CD8-positive, alpha-beta T cell (primary cell): ENCODE measurements at regions of chr12 and their contacts with region 1.

Region 1: DNA sequence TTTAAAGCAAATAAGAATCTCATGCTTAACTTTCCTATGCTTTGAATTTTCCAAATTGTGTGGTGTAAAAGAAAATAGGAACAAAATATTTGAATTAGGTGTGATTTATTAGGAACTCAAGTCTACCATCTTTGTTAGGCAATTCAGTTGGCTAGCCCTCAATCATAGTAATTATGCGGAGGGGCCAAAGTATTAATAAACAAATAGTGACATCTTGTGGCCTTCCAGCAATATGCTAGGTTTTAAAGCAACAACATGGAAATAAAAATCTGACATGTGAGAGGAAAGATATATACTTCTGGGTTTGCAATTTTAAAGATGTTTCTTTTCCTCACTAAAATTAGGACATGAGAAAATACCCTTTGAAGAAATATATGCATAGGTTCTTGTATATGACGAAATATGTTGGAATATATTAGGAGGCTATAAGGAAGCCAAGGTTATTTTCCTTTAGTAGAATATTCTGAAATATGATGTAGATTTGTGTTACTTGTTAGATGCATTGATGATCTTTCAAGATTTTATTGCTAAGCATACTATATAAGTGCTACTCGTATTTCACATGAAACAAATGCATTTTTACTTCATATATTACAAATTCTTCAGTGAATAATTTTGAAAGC is 200.4 kb downstream of the PTPRO start:
- DNase-seq: peak in 2 of 9 experiments; percentile 19 to 24
- ATAC-seq: no peak
- H3K4me3 ChIP-seq: no peak overlapping the region
- H3K4me3 Mint-ChIP-seq: no peak overlapping the region
- H3K27ac ChIP-seq: no peak overlapping the region
- H3K27ac Mint-ChIP-seq: no peak overlapping the region
- H3K4me1 ChIP-seq: no peaks in the 10 kb centered on the region
- H3K4me1 Mint-ChIP-seq: peaks cover 2% of the 10 kb centered on the region
- H3K27me3 ChIP-seq: no peaks in the 10 kb centered on the region
- H3K27me3 Mint-ChIP-seq: peaks cover 30% of the 10 kb centered on the region
- CTCF ChIP-seq: no peak

Region 2: GRCh38 chr12:15268927-15269552 is 253.6 kb before region 1 on chr12:
- CTCF ChIA-PET with region 1: no interaction called
- POLR2A ChIA-PET with region 1: no interaction called
- intact Hi-C with region 1: loop called in 1 of 2 experiments (anchors 5 kb)
- DNase-seq: peak in 5 of 9 experiments; percentile 18 to 71 (median 27)
- ATAC-seq: peak; percentile 72
- H3K4me3 ChIP-seq: no peak overlapping the region
- H3K4me3 Mint-ChIP-seq: no peak overlapping the region
- H3K27ac ChIP-seq: no peak overlapping the region
- H3K27ac Mint-ChIP-seq: no peak overlapping the region
- H3K4me1 ChIP-seq: no peaks in the 10 kb centered on the region
- H3K4me1 Mint-ChIP-seq: no peaks in the 10 kb centered on the region
- H3K27me3 ChIP-seq: no peaks in the 10 kb centered on the region
- H3K27me3 Mint-ChIP-seq: peaks cover 5% of the 10 kb centered on the region
- CTCF ChIP-seq: peak; percentile 89

Region 3: GRCh38 chr12:15428632-15429031 is 94.0 kb before region 1 on chr12:
- CTCF ChIA-PET with region 1: no interaction called
- POLR2A ChIA-PET with region 1: no interaction called
- intact Hi-C with region 1: no loop called
- DNase-seq: no peak
- ATAC-seq: no peak
- H3K4me3 ChIP-seq: no peak overlapping the region
- H3K4me3 Mint-ChIP-seq: no peak overlapping the region
- H3K27ac ChIP-seq: no peak overlapping the region
- H3K27ac Mint-ChIP-seq: no peak overlapping the region
- H3K4me1 ChIP-seq: no peaks in the 10 kb centered on the region
- H3K4me1 Mint-ChIP-seq: no peaks in the 10 kb centered on the region
- H3K27me3 ChIP-seq: no peaks in the 10 kb centered on the region
- H3K27me3 Mint-ChIP-seq: peaks cover 10% of the 10 kb centered on the region
- CTCF ChIP-seq: no peak

Region 4: GRCh38 chr12:15488481-15488880 is 34.2 kb before region 1 on chr12:
- CTCF ChIA-PET with region 1: no interaction called
- POLR2A ChIA-PET with region 1: no interaction called
- intact Hi-C with region 1: no loop called
- DNase-seq: no peak
- ATAC-seq: no peak
- H3K4me3 ChIP-seq: no peak overlapping the region
- H3K4me3 Mint-ChIP-seq: no peak overlapping the region
- H3K27ac ChIP-seq: no peak overlapping the region
- H3K27ac Mint-ChIP-seq: no peak overlapping the region
- H3K4me1 ChIP-seq: no peaks in the 10 kb centered on the region
- H3K4me1 Mint-ChIP-seq: no peaks in the 10 kb centered on the region
- H3K27me3 ChIP-seq: peaks cover 0 to 4% of the 10 kb centered on the region in 2 experiments
- H3K27me3 Mint-ChIP-seq: peaks cover 14% of the 10 kb centered on the region
- CTCF ChIP-seq: no peak

Region 5: GRCh38 chr12:15899282-15899870 is 376.7 kb after region 1 on chr12:
- CTCF ChIA-PET with region 1: no interaction called
- POLR2A ChIA-PET with region 1: no interaction called
- intact Hi-C with region 1: no loop called
- DNase-seq: peak in 2 of 9 experiments; percentile 46 to 62
- ATAC-seq: peak; percentile 44
- H3K4me3 ChIP-seq: no peak overlapping the region
- H3K4me3 Mint-ChIP-seq: no peak overlapping the region
- H3K27ac ChIP-seq: no peak overlapping the region
- H3K27ac Mint-ChIP-seq: peak overlapping the region; percentile 74
- H3K4me1 ChIP-seq: no peaks in the 10 kb centered on the region
- H3K4me1 Mint-ChIP-seq: peaks cover 6% of the 10 kb centered on the region
- H3K27me3 ChIP-seq: no peaks in the 10 kb centered on the region
- H3K27me3 Mint-ChIP-seq: no peaks in the 10 kb centered on the region
- CTCF ChIP-seq: peak; percentile 94

Region 6: DNA sequence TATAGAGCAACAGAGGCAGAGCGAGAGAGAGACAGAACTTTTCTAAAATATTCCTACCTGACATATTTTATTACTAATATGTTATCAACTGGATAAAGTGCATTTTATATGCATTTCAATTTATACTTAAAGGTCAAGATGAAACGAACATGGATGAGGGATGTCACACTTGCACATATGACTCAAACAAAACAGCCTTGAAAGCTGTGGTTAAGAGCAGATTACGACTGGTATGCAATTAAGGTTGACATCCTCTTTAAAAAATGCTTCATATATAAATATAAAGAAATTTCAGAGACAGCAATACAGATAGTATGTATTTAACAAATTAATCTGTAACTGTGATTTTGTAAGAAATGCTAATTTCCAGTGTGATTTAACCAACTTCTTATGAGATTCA is 1030.8 kb after region 1 on chr12:
- CTCF ChIA-PET with region 1: no interaction called
- POLR2A ChIA-PET with region 1: no interaction called
- intact Hi-C with region 1: no loop called
- DNase-seq: no peak
- ATAC-seq: no peak
- H3K4me3 ChIP-seq: no peak overlapping the region
- H3K4me3 Mint-ChIP-seq: no peak overlapping the region
- H3K27ac ChIP-seq: no peak overlapping the region
- H3K27ac Mint-ChIP-seq: no peak overlapping the region
- H3K4me1 ChIP-seq: no peaks in the 10 kb centered on the region
- H3K4me1 Mint-ChIP-seq: no peaks in the 10 kb centered on the region
- H3K27me3 ChIP-seq: no peaks in the 10 kb centered on the region
- H3K27me3 Mint-ChIP-seq: no peaks in the 10 kb centered on the region
- CTCF ChIP-seq: no peak